ENCODE measurements at regions of chr6 and their contacts with region 1.

Region 1: DNA sequence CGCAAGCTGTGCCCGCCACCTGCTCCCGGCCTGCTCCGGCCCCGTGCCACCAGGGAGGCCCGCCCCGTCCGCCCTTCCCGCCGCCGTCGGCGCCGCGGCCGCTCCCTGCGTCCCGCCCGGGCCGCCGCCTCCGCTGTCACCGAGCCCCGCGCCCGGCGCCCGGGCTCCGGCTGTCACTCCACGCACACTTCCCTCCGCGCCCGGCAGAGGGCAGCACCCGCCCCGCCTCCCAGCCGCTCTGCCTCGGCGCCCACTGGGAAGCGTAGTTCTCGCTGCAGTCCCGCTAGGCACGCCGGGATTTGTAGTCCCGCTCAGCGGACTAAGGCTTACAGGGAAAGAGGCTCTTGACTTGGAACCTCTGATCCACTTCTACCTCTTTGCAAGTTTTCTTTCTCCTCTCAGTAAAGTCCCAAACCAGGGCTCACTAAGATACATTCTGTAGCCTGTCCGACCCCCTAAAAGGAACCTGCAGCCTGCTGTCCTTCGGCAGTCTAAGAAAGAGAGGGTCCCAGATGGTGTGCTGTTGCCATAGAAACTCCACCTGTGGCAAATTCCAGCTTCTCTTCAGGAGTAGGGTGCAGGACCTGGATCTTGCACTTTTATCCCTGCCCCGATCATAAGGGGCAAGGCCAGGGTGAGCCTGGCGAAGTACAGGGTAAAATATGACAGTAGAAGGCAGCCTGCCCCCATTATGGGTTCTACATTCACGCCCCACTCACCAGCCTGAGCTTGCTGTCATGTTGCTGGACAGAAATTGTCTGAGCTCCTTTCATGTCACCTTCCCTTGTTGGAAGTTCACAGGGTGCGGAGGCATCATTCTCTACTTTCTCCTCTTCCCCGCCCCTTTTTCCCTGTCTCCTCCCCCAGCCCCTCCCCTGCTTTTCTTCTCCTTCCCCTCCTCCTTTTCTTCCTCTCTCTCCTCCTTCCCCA is at the start of gene TFEB:
- DNase-seq: peak; percentile 65
- ATAC-seq: peak; percentile 78
- H3K4me3 ChIP-seq: peak within 1 kb of the TSS; percentile 64 to 86
- H3K27ac ChIP-seq: no peak within 1 kb of the TSS
- H3K4me1 ChIP-seq: peaks cover 14% of the 10 kb centered on the region
- H3K27me3 ChIP-seq: no peaks in the 10 kb centered on the region
- CTCF ChIP-seq: peak; percentile 99
- total RNA-seq, gene TFEB: 13.3 TPM

Region 2: GRCh38 chr6:41757931-41758563 is 22.4 kb after region 1 on chr6:
- CTCF ChIA-PET with region 1: interaction called, 11 read pairs
- POLR2A ChIA-PET with region 1: no interaction called
- in situ Hi-C with region 1: no loop called
- intact Hi-C with region 1: no loop called
- DNase-seq: no peak
- ATAC-seq: no peak
- H3K4me3 ChIP-seq: no peak overlapping the region
- H3K27ac ChIP-seq: no peak overlapping the region
- H3K4me1 ChIP-seq: no peaks in the 10 kb centered on the region
- H3K27me3 ChIP-seq: no peaks in the 10 kb centered on the region
- CTCF ChIP-seq: no peak

Region 3: DNA sequence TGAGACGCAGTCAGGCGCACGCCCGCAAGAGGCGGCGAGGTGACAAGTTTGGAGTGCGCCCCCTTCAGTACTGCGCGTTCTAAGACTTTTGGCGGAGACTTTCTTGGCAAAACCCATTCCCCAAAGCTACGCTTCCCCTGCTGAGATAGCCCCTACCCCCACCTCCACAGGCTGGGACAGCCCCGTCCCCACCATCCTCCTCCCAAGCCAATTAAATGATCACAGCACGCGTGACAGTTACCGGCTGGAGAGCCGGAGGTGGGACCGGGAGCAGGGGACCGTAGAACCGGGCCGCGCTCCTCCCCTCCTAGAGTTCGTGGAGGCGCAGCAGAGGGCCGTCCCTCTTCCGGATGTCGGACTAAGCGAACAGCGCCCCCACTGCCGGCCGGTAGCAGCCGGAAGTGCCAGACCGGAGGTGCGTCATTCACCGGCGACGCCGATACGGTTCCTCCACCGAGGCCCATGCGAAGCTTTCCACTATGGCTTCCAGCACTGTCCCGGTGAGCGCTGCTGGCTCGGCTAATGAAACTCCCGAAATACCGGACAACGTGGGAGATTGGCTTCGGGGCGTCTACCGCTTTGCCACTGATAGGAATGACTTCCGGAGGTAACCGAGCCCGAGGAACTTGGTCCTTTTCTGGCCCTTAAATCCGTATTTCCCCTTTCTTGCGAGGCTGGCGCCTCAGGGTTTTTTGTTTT is 51.7 kb after region 1 on chr6 and contains the start of gene TOMM6:
- CTCF ChIA-PET with region 1: interaction called, 15 read pairs
- POLR2A ChIA-PET with region 1: no interaction called
- in situ Hi-C with region 1: no loop called
- intact Hi-C with region 1: loop called (anchors 10 kb)
- DNase-seq: peak; percentile 79
- ATAC-seq: peak; percentile 88
- H3K4me3 ChIP-seq: peak within 1 kb of the TSS; percentile 71 to 92
- H3K27ac ChIP-seq: peak within 1 kb of the TSS; percentile 92
- H3K4me1 ChIP-seq: peaks cover 7% of the 10 kb centered on the region; the same call in 1 of the 2 replicates
- H3K27me3 ChIP-seq: no peaks in the 10 kb centered on the region
- CTCF ChIP-seq: peak; percentile 94
- total RNA-seq, gene TOMM6: 234 TPM

Measured in Panc1 (cell line).